ENCODE measurements at regions of chr5 and their contacts with region 1.

Region 1: DNA sequence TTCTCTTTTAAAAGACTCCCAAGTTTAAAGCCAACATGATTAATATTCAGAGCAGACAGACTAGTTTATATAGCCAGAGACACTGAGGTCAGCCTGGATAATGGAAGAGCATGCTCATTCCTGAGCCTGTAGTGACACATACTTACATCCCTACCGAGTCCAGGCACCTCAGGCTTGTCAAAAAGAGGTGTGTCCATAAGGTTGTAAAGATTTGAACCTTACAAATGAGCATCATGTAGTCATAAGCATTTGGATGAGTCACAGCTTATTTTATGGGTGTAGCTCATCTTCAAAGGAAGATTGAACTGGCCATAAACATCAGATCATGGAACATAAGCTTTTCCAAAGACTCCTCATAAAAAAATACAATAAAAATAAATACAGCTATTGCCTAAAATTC is 333.5 kb downstream of the EFNA5 start:
- DNase-seq: no peak
- H3K4me3 ChIP-seq: no peak overlapping the region
- H3K27ac ChIP-seq: no peak overlapping the region
- H3K4me1 ChIP-seq: peaks cover 3% of the 10 kb centered on the region
- H3K27me3 ChIP-seq: peaks cover 9% of the 10 kb centered on the region
- CTCF ChIP-seq: no peak

Region 2: GRCh38 chr5:107263387-107264018 is 73.8 kb before region 1 on chr5:
- CTCF ChIA-PET with region 1: no interaction called
- POLR2A ChIA-PET with region 1: no interaction called
- intact Hi-C with region 1: loop called (anchors 2 kb)
- DNase-seq: no peak
- H3K4me3 ChIP-seq: no peak overlapping the region
- H3K27ac ChIP-seq: no peak overlapping the region
- H3K4me1 ChIP-seq: no peaks in the 10 kb centered on the region
- H3K27me3 ChIP-seq: no peaks in the 10 kb centered on the region
- CTCF ChIP-seq: no peak

Region 3: GRCh38 chr5:107519900-107520354 is 182.6 kb after region 1 on chr5:
- CTCF ChIA-PET with region 1: no interaction called
- POLR2A ChIA-PET with region 1: no interaction called
- intact Hi-C with region 1: no loop called
- DNase-seq: no peak
- H3K4me3 ChIP-seq: no peak overlapping the region
- H3K27ac ChIP-seq: no peak overlapping the region
- H3K4me1 ChIP-seq: peaks cover 18% of the 10 kb centered on the region
- H3K27me3 ChIP-seq: no peaks in the 10 kb centered on the region
- CTCF ChIP-seq: no peak